ENCODE measurements at regions of chr12 and their contacts with region 1.

Region 1: GRCh38 chr12:55955800-55956508 is 9.9 kb downstream of the PMEL start:
- DNase-seq: peak in 12 of 35 experiments; percentile 14 to 61 (median 30)
- ATAC-seq: peak; percentile 68 to 84 (median 72)
- H3K4me3 ChIP-seq: no peak overlapping the region
- H3K4me3 Mint-ChIP-seq: no peak overlapping the region
- H3K27ac ChIP-seq: peak overlapping the region; percentile 5
- H3K27ac Mint-ChIP-seq: peak overlapping the region; percentile 81 to 88
- H3K4me1 ChIP-seq: peaks cover 0 to 21% of the 10 kb centered on the region in 2 experiments
- H3K4me1 Mint-ChIP-seq: peaks cover 27 to 32% (median 31%) of the 10 kb centered on the region in 3 donors
- H3K27me3 ChIP-seq: no peaks in the 10 kb centered on the region
- H3K27me3 Mint-ChIP-seq: no peaks in the 10 kb centered on the region

Region 2: DNA sequence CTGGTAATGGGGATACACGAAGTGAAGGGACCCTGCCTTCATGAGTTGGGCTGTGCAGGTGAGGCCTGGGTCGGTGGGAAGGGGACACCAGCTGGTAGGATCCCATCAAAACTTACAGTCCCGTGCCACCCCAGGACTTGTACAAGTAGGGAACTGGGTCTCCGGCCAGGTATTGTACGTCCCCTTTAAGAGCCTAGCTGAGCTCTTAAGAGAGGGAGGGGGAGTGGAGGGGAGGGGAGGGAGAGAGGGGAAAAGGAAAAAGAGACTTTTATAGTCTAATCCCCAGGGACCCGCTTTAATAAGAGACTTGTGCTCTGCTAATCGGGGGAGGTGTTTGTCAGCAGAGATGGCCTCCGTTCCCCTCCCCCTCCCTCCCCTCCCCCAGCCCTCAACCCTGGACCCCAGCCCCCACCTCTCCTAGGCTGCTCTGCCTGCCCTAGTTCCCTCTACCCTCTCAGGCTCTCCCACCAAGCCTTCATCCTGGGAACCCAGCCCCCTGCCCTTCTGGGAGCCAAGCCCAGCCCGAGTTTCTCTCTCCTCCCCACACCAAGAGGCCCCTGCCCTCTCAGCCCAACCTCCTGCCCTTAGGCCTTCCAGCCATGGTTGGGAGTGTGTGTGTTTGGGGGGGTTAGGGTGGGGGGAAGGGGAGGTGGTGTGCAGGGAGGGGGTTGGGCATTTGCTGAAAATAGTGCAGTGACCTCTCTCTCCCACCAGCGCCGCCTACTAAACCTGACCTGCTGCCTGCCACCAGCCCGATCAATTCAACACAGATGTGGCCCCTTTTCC is 210.4 kb before region 1 on chr12:
- CTCF ChIA-PET with region 1: interaction called in 1 of 2 experiments, 11 read pairs
- POLR2A ChIA-PET with region 1: interaction called in 1 of 2 experiments, 3 read pairs
- DNase-seq: no peak
- ATAC-seq: no peak
- H3K4me3 ChIP-seq: no peak overlapping the region
- H3K4me3 Mint-ChIP-seq: peak overlapping the region; percentile 91 to 92 (median 91)
- H3K27ac ChIP-seq: no peak overlapping the region
- H3K27ac Mint-ChIP-seq: peak overlapping the region; percentile 80 to 90
- H3K4me1 ChIP-seq: peaks cover 8 to 31% of the 10 kb centered on the region in 2 experiments
- H3K4me1 Mint-ChIP-seq: peaks cover 26 to 48% (median 40%) of the 10 kb centered on the region in 3 donors
- H3K27me3 ChIP-seq: no peaks in the 10 kb centered on the region
- H3K27me3 Mint-ChIP-seq: no peaks in the 10 kb centered on the region

Region 3: GRCh38 chr12:55789171-55789570 is 166.8 kb before region 1 on chr12:
- CTCF ChIA-PET with region 1: no interaction called
- POLR2A ChIA-PET with region 1: interaction called in 1 of 2 experiments, 11 read pairs
- DNase-seq: no peak
- ATAC-seq: no peak
- H3K4me3 ChIP-seq: no peak overlapping the region
- H3K4me3 Mint-ChIP-seq: no peak overlapping the region
- H3K27ac ChIP-seq: no peak overlapping the region
- H3K27ac Mint-ChIP-seq: no peak overlapping the region
- H3K4me1 ChIP-seq: no peaks in the 10 kb centered on the region
- H3K4me1 Mint-ChIP-seq: peaks cover 0 to 2% (median 0%) of the 10 kb centered on the region in 3 donors
- H3K27me3 ChIP-seq: no peaks in the 10 kb centered on the region
- H3K27me3 Mint-ChIP-seq: no peaks in the 10 kb centered on the region

Region 4: GRCh38 chr12:55982319-55982936 is 26.5 kb after region 1 on chr12:
- CTCF ChIA-PET with region 1: interaction called, 9 to 12 read pairs
- POLR2A ChIA-PET with region 1: no interaction called
- DNase-seq: no peak
- ATAC-seq: no peak
- H3K4me3 ChIP-seq: no peak overlapping the region
- H3K4me3 Mint-ChIP-seq: no peak overlapping the region
- H3K27ac ChIP-seq: no peak overlapping the region
- H3K27ac Mint-ChIP-seq: no peak overlapping the region
- H3K4me1 ChIP-seq: peaks cover 0 to 5% of the 10 kb centered on the region in 2 experiments
- H3K4me1 Mint-ChIP-seq: peaks cover 28 to 33% (median 29%) of the 10 kb centered on the region in 3 donors
- H3K27me3 ChIP-seq: no peaks in the 10 kb centered on the region
- H3K27me3 Mint-ChIP-seq: no peaks in the 10 kb centered on the region